B cell (primary cell): ENCODE measurements at regions of chr11 and their contacts with region 1.

Region 1: DNA sequence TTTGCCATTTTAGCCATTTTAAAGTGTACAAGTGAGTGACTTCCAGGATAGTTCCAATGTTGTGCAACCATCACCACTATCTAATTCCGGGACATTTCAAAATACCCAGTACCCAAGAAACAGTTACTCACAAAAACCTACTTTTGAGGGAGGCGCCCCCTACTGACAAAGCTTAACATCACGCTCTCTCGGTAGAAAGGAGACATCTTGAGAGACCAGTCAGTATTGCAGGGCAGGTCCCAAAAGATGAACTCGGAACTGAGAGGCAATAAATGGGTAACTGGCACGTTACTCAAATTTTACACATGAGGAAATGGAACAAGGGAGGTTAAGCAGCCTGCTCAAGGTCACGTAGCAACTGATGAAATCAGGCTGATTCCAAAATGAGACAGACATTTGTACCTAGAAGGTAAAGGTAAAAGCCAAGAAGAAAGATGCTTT is 50.0 kb upstream of the POU2AF1 start:
- DNase-seq: peak; percentile 75
- ATAC-seq: peak; percentile 89
- H3K4me3 ChIP-seq: no peak overlapping the region
- H3K4me3 Mint-ChIP-seq: no peak overlapping the region
- H3K27ac ChIP-seq: no peak overlapping the region
- H3K27ac Mint-ChIP-seq: no peak overlapping the region
- H3K4me1 ChIP-seq: no peaks in the 10 kb centered on the region
- H3K4me1 Mint-ChIP-seq: peaks cover 5% of the 10 kb centered on the region
- H3K27me3 ChIP-seq: peaks cover 0 to 4% (median 0%) of the 10 kb centered on the region in 4 experiments
- H3K27me3 Mint-ChIP-seq: no peaks in the 10 kb centered on the region
- CTCF ChIP-seq: peak; percentile 81

Region 2: DNA sequence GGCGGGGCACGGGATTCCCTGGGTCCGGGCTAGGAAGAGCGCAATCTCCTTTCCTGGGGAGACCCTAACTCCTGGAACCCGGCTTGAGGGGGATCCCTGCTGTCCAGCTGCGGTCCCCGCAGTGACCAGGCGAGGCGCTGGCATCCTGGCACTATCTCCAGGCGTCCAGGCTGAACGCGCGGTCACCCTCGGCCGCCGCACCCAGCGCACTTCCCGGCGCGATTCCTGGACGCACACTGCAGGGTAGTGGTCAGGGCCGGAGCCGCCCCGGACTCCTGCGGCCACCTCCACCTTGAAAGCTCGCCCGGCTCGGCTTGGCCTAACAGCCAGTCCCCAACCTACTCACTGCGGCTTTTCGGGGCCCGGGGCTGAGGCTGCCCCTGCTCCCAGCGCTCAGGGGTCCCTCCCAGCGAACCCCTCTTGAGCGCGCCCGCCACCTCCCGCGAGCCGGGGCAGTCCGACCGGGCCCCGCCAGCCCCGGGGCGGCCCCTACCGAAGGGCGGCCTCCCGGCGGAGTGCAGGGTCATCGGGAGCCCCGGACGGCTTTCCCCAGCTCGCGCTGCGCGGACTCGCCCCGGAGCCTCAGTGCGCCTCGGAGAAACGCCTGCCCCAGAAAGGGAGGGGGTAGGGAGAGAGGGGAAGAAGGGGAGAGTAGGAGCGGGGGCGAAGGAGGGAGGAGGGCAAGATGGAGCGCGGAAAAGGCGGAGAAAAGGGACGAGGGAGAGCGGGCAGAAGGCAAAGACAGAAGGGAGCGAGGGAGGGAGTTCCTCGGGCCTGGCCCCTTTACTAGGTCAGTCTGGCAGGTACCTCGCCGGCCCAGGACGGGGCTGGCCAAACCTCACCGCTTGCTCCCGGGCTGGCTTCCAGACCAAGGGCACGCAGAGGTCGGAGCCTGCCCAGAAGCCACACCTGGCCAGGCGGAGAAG is 129.7 kb before region 1 on chr11:
- CTCF ChIA-PET with region 1: interaction called, 29 read pairs
- POLR2A ChIA-PET with region 1: no interaction called
- intact Hi-C with region 1: no loop called
- DNase-seq: peak; percentile 46
- ATAC-seq: peak; percentile 59
- H3K4me3 ChIP-seq: peak overlapping the region in 4 of 5 experiments; percentile 57 to 77 (median 66)
- H3K4me3 Mint-ChIP-seq: peak overlapping the region; percentile 76
- H3K27ac ChIP-seq: peak overlapping the region in 1 of 2 donors; percentile 23
- H3K27ac Mint-ChIP-seq: peak overlapping the region; percentile 61
- H3K4me1 ChIP-seq: peaks cover 32 to 45% of the 10 kb centered on the region in 2 donors
- H3K4me1 Mint-ChIP-seq: peaks cover 35% of the 10 kb centered on the region
- H3K27me3 ChIP-seq: peaks cover 0 to 29% (median 9%) of the 10 kb centered on the region in 4 experiments
- H3K27me3 Mint-ChIP-seq: peaks cover 12% of the 10 kb centered on the region
- CTCF ChIP-seq: peak; percentile 37

Region 3: DNA sequence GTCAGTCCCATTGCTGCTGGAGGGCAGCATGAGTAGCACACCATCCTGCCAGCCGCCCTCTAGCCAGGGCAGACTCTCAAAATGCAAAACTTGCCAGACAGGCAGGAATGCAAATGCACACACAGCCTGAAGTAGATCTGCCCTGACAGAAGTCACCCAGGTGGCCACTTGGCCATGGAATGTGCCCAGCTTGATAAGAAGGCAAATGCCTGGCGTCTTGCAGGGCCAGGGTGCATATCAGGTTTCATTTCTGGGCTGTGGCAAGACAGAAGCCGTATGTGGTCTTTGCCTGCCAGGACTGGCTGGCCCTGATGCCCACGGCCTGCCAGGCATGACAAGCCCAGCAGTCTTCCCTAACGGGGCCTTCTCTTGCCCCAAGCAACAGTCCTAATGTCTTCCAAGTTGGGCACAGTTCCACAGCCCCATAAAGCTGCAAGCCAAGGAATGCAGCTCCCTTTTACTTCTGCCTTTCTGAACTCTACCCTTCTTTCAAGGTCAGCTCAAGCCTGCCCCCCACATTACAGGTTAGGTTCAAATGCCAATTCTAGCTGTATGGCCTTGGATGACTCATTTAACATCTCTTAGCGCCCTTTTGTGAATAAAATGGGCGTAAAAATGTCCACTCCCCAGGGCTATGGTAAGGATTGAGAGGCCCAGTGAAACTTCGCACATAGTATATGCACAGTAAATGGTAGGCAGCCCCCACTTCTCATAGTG is 101.0 kb before region 1 on chr11:
- CTCF ChIA-PET with region 1: interaction called, 14 read pairs
- POLR2A ChIA-PET with region 1: no interaction called
- intact Hi-C with region 1: no loop called
- DNase-seq: no peak
- ATAC-seq: no peak
- H3K4me3 ChIP-seq: no peak overlapping the region
- H3K4me3 Mint-ChIP-seq: no peak overlapping the region
- H3K27ac ChIP-seq: no peak overlapping the region
- H3K27ac Mint-ChIP-seq: no peak overlapping the region
- H3K4me1 ChIP-seq: no peaks in the 10 kb centered on the region
- H3K4me1 Mint-ChIP-seq: peaks cover 6% of the 10 kb centered on the region
- H3K27me3 ChIP-seq: no peaks in the 10 kb centered on the region
- H3K27me3 Mint-ChIP-seq: no peaks in the 10 kb centered on the region
- CTCF ChIP-seq: no peak

Region 4: DNA sequence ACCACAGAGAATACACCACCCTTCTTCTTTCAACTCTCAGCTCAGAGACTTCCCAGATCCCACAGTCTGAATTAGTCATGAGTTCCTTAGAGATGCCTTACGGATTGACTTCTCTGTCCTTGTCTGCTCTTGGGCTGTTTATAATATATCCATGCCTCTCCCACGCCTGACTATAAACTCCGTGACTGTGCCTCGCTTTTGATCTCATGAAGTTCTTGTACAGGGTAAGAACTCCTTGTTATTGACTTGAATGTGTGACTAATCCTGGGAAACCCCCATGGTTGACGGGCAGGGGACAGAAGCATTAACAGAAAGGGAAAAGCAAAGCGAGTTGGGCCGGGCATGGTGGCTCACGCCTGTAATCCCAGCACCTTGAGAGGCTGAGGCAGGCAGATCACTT is 12.4 kb after region 1 on chr11:
- CTCF ChIA-PET with region 1: interaction called, 112 read pairs
- POLR2A ChIA-PET with region 1: no interaction called
- intact Hi-C with region 1: no loop called
- DNase-seq: no peak
- ATAC-seq: no peak
- H3K4me3 ChIP-seq: no peak overlapping the region
- H3K4me3 Mint-ChIP-seq: no peak overlapping the region
- H3K27ac ChIP-seq: no peak overlapping the region
- H3K27ac Mint-ChIP-seq: no peak overlapping the region
- H3K4me1 ChIP-seq: peaks cover 23 to 36% of the 10 kb centered on the region in 2 donors
- H3K4me1 Mint-ChIP-seq: peaks cover 47% of the 10 kb centered on the region
- H3K27me3 ChIP-seq: peaks cover 0 to 3% (median 0%) of the 10 kb centered on the region in 4 experiments
- H3K27me3 Mint-ChIP-seq: no peaks in the 10 kb centered on the region
- CTCF ChIP-seq: no peak

Region 5: GRCh38 chr11:111500481-111500880 is 71.4 kb after region 1 on chr11:
- CTCF ChIA-PET with region 1: no interaction called
- POLR2A ChIA-PET with region 1: no interaction called
- intact Hi-C with region 1: no loop called
- DNase-seq: no peak
- ATAC-seq: no peak
- H3K4me3 ChIP-seq: no peak overlapping the region
- H3K4me3 Mint-ChIP-seq: no peak overlapping the region
- H3K27ac ChIP-seq: no peak overlapping the region
- H3K27ac Mint-ChIP-seq: no peak overlapping the region
- H3K4me1 ChIP-seq: no peaks in the 10 kb centered on the region
- H3K4me1 Mint-ChIP-seq: no peaks in the 10 kb centered on the region
- H3K27me3 ChIP-seq: peaks cover 0 to 9% (median 8%) of the 10 kb centered on the region in 4 experiments
- H3K27me3 Mint-ChIP-seq: peaks cover 40% of the 10 kb centered on the region
- CTCF ChIP-seq: no peak